PC-3 (cell line): ENCODE measurements at regions of chr12 and their contacts with region 1.

Region 1: DNA sequence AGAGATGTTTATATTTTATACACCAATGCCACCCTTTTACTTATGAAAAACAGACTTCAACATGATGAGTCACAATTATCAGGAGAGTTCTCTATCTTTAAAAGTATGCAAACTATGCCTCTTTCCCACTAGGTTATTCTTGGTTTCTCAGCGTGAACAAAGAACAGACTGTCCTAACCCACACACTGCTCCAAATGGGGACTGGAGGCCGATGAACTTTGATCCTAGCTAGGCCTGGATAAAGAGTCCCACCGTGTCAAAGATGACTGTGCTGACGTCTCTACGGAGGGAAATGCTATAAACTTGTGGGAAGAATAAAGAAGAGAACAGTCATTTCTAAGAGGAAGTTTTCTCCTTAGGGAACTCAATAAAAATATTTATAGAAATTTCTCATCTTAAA is 160.1 kb downstream of the EPS8 start:
- DNase-seq: peak; percentile 90
- ATAC-seq: peak; percentile 87
- H3K4me3 ChIP-seq: no peak overlapping the region
- H3K27ac ChIP-seq: peak overlapping the region; percentile 100
- H3K4me1 ChIP-seq: peaks cover 68% of the 10 kb centered on the region
- H3K27me3 ChIP-seq: no peaks in the 10 kb centered on the region
- CTCF ChIP-seq: no peak

Region 2: DNA sequence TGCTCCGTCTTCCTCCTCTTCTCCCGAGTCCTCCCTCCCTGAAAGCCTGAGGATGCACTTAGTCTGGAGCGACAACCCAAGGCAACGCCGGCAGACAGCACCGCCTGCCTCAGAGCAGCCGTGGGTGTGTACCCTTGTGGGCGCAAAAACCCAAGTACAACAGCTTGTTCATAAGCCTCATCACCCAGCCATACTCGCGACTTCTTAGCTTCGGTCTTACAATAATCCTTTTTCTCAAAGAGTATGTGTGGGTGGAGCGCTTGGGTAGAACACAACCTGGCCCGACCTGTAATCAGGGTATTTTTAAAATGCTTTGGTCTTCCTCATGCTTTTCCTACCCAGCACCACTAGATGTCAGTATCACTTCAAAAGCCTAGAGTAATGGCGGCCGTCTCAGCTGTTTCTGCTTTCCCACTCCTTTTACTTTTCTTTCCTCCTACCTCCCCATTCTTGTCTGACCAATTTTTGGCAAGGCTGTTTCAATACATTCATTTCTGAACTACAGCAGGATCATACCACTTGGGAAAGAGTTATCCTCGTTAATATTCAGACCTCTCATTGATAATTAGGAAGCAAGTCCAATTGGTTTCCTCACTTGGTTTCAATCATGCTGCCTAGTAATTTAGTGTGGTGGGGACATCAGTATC is 38.8 kb before region 1 on chr12:
- CTCF ChIA-PET with region 1: no interaction called
- POLR2A ChIA-PET with region 1: no interaction called
- intact Hi-C with region 1: loop called (anchors 5 kb)
- DNase-seq: peak; percentile 74
- ATAC-seq: peak; percentile 62
- H3K4me3 ChIP-seq: peak overlapping the region; percentile 67
- H3K27ac ChIP-seq: peak overlapping the region; percentile 75
- H3K4me1 ChIP-seq: peaks cover 30% of the 10 kb centered on the region
- H3K27me3 ChIP-seq: no peaks in the 10 kb centered on the region
- CTCF ChIP-seq: peak; percentile 85

Region 3: DNA sequence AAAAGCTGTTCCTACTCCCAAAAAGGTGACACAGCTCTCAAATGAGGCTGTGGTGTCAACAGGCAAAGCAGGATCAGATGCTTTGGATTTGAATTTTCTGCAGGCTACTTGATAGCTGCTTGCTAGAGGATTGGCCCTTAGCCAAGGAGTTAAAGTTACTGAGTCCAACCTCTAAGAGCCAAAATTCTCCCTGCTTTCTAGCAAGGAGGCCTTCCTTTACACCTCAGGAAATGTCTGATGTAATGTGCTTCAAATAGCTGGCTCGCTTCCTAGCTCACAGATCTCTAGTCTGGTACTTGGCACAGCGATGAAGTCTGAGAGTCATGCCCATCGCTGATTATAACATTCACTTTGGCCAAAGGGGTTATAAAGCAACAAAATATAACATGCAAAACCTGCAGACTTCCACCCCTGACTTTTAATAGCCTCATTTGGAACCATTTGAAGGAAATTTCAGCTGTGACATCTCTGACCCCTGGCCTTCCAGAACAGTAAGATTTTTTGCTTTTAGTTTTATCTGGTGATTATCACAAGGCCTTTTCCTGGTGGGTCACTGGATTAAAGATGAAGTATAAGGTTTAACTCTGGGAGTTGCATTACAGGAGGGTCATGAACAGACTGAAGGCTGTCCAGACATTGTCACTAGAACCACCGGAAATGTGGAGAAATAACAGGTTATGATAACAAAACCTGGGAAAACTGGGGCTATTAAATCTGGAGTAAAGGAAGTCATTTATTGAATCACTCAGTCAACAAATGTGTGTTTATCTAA is 29.7 kb before region 1 on chr12:
- CTCF ChIA-PET with region 1: no interaction called
- POLR2A ChIA-PET with region 1: no interaction called
- intact Hi-C with region 1: loop called (anchors 2 kb)
- DNase-seq: peak; percentile 81
- ATAC-seq: peak; percentile 52
- H3K4me3 ChIP-seq: no peak overlapping the region
- H3K27ac ChIP-seq: peak overlapping the region; percentile 98
- H3K4me1 ChIP-seq: peaks cover 42% of the 10 kb centered on the region
- H3K27me3 ChIP-seq: no peaks in the 10 kb centered on the region
- CTCF ChIP-seq: no peak